ENCODE measurements at regions of chr14 and their contacts with region 1.

Region 1: GRCh38 chr14:91649930-91650329 is 82.0 kb downstream of the CATSPERB start:
- DNase-seq: peak; percentile 43 to 55
- ATAC-seq: peak in 1 of 2 experiments; percentile 69; a peak in 3 of 6 replicates
- H3K4me3 ChIP-seq: no peak overlapping the region
- H3K27ac ChIP-seq: no peak overlapping the region
- H3K4me1 ChIP-seq: no peaks in the 10 kb centered on the region
- CTCF ChIP-seq: peak; percentile 81
- EP300 ChIP-seq: no peak
- POLR2A ChIP-seq: no peak
- RAD21 ChIP-seq: peak; percentile 77 to 88

Region 2: DNA sequence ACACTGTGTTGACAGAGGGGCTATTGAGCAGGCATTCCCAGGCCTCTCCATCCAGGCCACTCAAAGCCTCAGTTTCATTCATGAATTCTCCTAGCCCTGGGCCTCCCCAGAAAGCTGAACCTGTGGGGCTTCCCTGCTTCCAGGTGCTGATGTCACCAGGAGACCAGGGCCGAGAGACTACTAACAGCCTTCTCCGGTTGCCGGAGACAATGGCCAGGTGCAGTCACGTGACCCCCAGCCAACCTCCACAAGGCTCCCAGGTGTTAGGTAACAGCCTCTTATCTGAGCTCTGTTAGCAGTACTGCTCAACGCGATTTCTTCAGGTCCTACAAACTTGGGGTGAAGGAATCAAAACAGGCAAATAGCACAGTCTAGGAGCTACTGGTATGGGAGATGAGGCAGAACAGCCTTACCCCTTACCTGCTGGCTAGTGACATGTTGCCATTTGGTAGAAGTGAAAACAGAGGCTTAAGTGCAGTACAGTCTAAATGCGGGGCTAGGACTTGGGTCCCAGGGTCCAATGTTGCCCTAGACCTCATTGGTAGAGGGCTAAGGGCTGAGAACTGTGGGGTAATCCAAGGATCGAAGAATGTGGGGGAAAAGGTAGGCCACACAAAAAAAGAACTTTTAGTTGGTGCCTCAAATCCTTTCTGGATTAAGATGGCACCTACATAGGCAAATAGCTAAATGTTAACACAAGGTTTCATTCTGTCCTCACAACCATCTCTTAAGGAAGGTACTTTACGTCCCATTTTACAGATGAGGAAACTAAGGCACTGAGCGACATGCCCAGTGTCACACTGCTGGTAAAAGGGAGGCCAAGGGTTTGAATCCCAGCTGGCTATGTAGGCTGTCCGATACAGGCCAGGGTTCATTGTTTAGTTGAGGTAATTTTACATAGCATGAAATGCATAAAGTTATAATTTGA is 236.1 kb before region 1 on chr14:
- CTCF ChIA-PET with region 1: no interaction called
- POLR2A ChIA-PET with region 1: no interaction called
- DNase-seq: no peak
- ATAC-seq: no peak
- H3K4me3 ChIP-seq: no peak overlapping the region
- H3K27ac ChIP-seq: no peak overlapping the region
- H3K4me1 ChIP-seq: peaks cover 12% of the 10 kb centered on the region
- CTCF ChIP-seq: no peak
- EP300 ChIP-seq: no peak
- POLR2A ChIP-seq: no peak
- RAD21 ChIP-seq: no peak

Region 3: DNA sequence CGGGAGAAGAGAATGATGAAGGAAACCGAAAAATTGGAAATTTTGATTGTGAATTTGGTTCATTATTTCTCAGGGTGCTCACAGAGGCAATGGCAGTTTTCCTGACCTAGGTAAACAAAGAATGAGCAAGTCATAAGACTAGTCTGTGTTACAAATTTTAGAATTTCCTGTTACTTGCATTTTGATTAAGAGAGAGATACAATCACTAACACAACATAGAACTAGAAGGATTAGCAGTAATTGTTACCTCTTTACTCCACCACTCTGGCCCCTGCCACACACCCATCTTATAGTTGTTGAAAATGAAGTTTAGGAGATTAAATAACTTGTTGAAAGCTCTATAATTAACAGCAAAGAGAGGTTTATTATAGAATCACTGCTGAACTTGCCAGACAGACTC is 19.9 kb after region 1 on chr14:
- CTCF ChIA-PET with region 1: interaction called, 12 read pairs
- POLR2A ChIA-PET with region 1: no interaction called
- DNase-seq: no peak
- ATAC-seq: no peak
- H3K4me3 ChIP-seq: no peak overlapping the region
- H3K27ac ChIP-seq: no peak overlapping the region
- H3K4me1 ChIP-seq: no peaks in the 10 kb centered on the region
- CTCF ChIP-seq: no peak
- EP300 ChIP-seq: no peak
- POLR2A ChIP-seq: no peak
- RAD21 ChIP-seq: no peak

Region 4: GRCh38 chr14:91911474-91912032 is 261.6 kb after region 1 on chr14:
- CTCF ChIA-PET with region 1: interaction called, 65 read pairs
- POLR2A ChIA-PET with region 1: no interaction called
- DNase-seq: peak; percentile 56 to 68
- ATAC-seq: peak; percentile 94 to 97
- H3K4me3 ChIP-seq: no peak overlapping the region
- H3K27ac ChIP-seq: no peak overlapping the region
- H3K4me1 ChIP-seq: no peaks in the 10 kb centered on the region; the same call in 2 of the 3 replicates
- CTCF ChIP-seq: peak; percentile 70
- EP300 ChIP-seq: no peak
- POLR2A ChIP-seq: no peak
- RAD21 ChIP-seq: peak; percentile 85 to 87

Measured in A549 (cell line).